ENCODE measurements at regions of chr14 and their contacts with region 1.

Region 1: DNA sequence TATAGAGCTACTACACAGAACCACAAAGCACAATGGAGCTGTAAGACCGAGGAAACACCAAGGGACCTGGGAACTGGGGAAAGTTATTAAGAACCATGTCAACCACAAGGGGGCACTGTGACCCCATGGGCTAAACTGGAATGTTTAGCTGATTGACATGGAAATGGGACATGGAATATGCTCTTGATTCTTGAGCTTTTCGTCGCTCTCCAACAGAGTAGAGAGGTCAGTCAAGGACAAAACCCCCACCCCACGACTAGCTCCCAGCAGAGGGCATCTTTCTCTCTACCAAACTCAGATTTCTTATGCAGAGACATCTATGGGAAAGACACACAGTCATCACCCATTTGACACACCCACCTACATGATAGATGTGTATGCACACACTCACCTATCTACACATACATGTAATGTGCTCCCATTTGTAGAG is 10.1 kb downstream of the NDRG2 start:
- DNase-seq: peak; percentile 75
- H3K27ac ChIP-seq: no peak overlapping the region
- CTCF ChIP-seq: peak; percentile 90

Region 2: DNA sequence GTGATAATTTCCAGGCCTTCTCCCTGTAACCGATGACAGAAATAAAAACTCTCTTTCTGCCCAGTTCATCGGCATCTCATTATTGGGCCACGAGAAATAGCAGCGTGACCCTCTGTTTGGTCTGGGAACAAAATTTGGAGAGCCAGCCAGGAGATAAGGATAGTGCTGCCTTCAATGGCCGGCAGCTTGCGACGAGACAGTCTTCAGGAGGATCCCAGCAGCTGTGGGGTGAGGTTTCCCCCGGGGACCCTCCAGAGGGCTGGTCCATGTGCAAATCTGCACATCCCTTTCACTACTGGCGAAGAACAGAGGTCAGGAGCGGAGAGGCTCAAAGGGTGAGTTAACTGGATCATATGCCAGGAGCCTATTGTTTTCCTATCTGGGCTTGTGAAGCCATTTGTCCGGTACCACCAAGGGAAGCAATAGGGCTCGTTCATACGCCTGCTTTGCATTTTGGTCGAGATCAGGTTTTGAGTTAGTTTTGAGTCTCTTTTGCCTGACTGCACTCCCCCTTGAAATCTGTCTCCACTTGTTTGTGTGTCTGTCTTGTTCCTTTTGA is 10.9 kb before region 1 on chr14:
- CTCF ChIA-PET with region 1: interaction called, 23 read pairs
- POLR2A ChIA-PET with region 1: no interaction called
- DNase-seq: no peak
- H3K27ac ChIP-seq: no peak overlapping the region
- CTCF ChIP-seq: no peak

Region 3: GRCh38 chr14:21039585-21040369 is 25.0 kb after region 1 on chr14:
- CTCF ChIA-PET with region 1: interaction called, 83 read pairs
- POLR2A ChIA-PET with region 1: interaction called, 3 read pairs
- DNase-seq: peak; percentile 72
- H3K27ac ChIP-seq: no peak overlapping the region
- CTCF ChIP-seq: peak; percentile 68

Region 4: GRCh38 chr14:21092273-21093011 is 77.7 kb after region 1 on chr14:
- CTCF ChIA-PET with region 1: interaction called, 23 read pairs
- POLR2A ChIA-PET with region 1: no interaction called
- DNase-seq: no peak
- H3K27ac ChIP-seq: peak overlapping the region; percentile 32
- CTCF ChIP-seq: peak; percentile 99

Region 5: DNA sequence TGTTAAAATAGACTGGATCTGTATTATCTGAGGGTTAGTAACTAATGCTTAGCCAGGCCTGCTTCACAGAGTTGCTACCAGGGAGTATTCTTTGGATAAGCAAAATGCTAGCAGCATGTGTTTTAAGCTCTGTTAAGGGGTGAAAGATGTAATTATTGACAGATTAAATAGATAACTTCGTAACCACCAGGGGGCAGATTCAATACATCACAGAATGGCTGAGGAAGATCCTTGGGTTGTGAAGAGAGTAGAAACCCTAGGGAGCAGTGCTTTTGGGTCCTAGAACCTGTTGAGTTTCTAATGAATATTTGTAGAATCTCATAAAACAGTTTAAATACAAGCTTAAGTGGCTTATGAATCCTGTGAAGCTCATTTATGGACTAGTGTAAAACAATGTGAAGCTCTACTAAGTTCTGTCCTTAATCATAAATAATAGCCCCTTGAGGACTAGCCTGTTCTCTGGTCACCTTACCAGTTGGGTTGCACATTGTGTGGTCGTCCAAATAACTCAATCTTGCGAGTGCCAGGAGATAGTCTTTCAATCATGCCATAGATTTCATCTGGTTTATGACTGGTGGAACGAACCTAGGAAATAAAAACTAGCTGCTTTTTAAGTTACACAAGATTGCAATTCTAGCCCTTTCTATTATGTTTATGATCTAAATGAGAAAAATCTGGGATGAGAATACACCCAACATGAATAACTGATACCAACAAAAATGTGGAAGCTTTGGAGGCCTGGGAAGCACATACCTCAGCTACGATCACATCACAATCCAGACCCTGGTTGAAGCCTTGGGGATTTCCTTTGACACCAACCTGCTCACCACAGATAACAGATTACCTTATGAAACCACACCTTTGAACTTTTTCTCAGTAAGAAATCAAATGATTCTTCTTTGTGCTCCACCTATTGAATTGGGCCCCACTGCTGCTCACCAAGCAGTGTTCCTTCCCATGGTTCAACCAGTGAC is 484.1 kb after region 1 on chr14:
- CTCF ChIA-PET with region 1: no interaction called
- POLR2A ChIA-PET with region 1: no interaction called
- DNase-seq: peak; percentile 31
- H3K27ac ChIP-seq: no peak overlapping the region
- CTCF ChIP-seq: peak; percentile 53